Breast epithelium (tissue), 4 donors: ENCODE measurements at regions of chr5 and their contacts with region 1.

Region 1: DNA sequence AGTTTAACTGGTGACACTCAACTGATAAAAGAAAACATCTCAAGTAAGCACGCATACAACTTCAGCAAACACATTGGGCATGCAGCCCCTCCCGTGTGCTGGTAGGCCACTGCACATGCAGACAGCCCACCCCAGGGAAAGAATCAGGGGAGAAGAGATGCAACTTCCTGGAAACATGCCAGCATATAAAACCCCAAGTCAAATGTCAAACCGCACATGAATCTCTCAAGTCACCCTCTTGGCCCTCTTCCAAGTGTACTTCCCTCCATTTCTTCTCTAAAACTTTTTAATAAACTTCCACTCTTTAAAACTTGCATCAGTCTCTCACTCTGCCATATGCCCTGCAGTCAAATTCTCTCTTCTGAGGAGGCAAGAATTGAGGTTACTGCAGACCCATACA is 732.7 kb downstream of the SEMA5A start:
- DNase-seq: no peak
- H3K4me3 ChIP-seq: no peak overlapping the region
- H3K27ac ChIP-seq: no peak overlapping the region
- H3K4me1 ChIP-seq: no peaks in the 10 kb centered on the region
- H3K27me3 ChIP-seq: no peaks in the 10 kb centered on the region
- CTCF ChIP-seq: no peak
- POLR2A ChIP-seq: no peak

Region 2: DNA sequence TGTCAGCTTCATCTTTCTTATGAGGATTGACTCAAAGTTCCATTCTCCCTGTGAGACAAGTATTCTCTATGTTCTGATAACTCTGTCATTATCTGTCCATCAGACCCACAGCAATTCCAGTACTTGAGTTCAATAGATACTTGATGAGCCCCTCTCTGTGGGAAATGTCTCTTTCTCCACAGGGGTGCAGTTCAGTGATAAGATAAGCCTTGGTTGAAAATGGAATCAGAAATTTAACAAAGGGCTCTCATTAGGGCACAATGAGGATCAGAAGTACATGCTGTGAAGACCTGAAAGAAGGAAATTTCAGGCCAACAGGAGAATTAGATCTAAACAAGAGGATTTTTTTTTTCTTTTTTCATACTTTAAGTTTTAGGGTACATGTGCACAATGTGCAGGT is 206.9 kb before region 1 on chr5:
- intact Hi-C with region 1: no loop called
- DNase-seq: no peak
- H3K4me3 ChIP-seq: no peak overlapping the region
- H3K27ac ChIP-seq: no peak overlapping the region
- H3K4me1 ChIP-seq: no peaks in the 10 kb centered on the region
- H3K27me3 ChIP-seq: no peaks in the 10 kb centered on the region
- CTCF ChIP-seq: no peak
- POLR2A ChIP-seq: no peak

Region 3: DNA sequence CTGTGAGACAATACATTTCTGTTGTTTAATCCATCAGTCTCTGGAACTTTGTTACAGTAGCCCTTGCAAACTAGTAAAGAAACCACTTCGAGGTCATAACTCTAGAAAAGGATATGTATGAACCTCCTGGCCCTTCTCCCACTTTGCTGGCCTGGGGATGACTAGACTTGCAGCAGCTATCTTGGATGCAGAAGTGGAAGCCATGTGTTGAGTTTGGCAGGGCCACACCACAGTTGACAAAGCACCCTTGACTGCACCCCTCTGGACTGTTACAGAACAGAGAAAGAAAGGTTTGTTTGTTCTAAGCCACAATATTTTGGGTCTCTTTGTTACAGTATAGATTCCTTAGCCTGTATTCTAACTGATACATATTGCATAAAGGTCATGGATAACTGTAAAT is 1000.1 kb after region 1 on chr5:
- intact Hi-C with region 1: loop called (anchors 5 kb)
- DNase-seq: no peak
- H3K4me3 ChIP-seq: no peak overlapping the region
- H3K27ac ChIP-seq: no peak overlapping the region
- H3K4me1 ChIP-seq: no peaks in the 10 kb centered on the region
- H3K27me3 ChIP-seq: no peaks in the 10 kb centered on the region
- CTCF ChIP-seq: no peak
- POLR2A ChIP-seq: no peak